ENCODE measurements at regions of chr3 and their contacts with region 1.

Region 1: GRCh38 chr3:108552267-108553159 is 36.7 kb downstream of the CIP2A start:
- DNase-seq: no peak

Region 2: DNA sequence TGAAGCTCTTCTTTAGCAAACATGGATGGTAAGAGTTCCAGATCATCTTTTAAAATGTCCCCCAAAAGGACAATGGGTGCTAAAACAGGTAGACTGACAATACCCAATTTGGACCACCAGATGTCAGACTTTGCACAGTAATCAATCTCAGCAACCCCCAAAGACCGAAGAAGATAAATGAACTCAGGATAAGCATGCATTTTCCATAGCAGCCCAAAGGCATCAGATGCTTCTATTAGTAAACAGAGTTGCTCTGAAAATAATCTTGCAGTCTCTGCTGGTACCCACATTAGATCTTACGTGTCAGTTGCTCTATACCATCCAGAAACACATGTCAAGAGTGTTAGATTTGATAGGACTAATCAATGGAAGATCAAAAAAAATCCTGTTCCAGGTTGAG is 62.7 kb before region 1 on chr3:
- intact Hi-C with region 1: loop called (anchors 2 to 5 kb)
- DNase-seq: no peak